ENCODE measurements at regions of chr20 and their contacts with region 1.

Region 1: DNA sequence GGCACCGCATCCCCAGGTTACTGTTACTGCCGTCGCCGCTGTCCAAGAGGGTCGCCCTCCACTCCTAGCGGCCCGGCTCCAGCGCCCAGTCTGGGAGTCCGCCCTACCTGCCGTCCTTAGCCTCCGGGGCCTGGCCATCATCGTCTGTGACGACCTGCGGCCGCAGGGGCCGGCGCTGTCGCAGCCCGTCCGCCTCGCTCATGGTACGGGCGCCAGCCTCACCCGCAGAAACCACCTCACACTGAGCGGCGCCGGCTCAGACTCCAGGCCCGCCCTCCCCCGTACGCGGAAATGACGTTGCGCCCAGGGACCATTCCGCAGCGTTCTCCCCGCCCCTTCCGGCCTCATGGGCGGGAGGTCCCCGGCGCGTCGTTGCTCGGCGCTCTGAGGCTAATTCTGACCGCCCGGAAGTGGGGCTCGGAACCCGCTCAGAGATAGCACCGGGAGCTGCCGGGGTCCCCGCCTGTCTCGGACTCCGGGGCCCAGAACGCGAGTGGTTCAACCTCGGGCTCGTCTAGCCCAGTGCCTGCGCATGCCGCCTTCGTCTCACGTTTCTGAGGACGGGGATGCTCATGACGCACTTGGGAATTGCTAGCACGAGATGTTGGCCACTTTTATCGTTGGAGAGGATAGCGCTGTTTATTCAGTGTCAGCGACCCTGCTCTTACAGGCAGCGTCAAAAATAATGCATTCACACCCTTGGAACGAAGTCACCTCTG is at the start of gene APMAP:
- DNase-seq: peak; percentile 97
- H3K4me3 Mint-ChIP-seq: peak within 1 kb of the TSS; percentile 89
- H3K27ac Mint-ChIP-seq: peak within 1 kb of the TSS; percentile 90
- H3K4me1 Mint-ChIP-seq: peaks cover 57% of the 10 kb centered on the region
- H3K27me3 Mint-ChIP-seq: no peaks in the 10 kb centered on the region
- total RNA-seq, gene APMAP: 46.9 to 50.9 TPM

Region 2: GRCh38 chr20:24948939-24949679 is 43.5 kb before region 1 on chr20 and contains the start of gene CST7:
- CTCF ChIA-PET with region 1: interaction called, 3 read pairs
- intact Hi-C with region 1: loop called (anchors 1 kb)
- DNase-seq: peak; percentile 94
- H3K4me3 Mint-ChIP-seq: peak within 1 kb of the TSS; percentile 72
- H3K27ac Mint-ChIP-seq: peak within 1 kb of the TSS; percentile 96
- H3K4me1 Mint-ChIP-seq: peaks cover 40% of the 10 kb centered on the region
- H3K27me3 Mint-ChIP-seq: no peaks in the 10 kb centered on the region
- total RNA-seq, gene CST7: 37.8 to 43.1 TPM

Region 3: DNA sequence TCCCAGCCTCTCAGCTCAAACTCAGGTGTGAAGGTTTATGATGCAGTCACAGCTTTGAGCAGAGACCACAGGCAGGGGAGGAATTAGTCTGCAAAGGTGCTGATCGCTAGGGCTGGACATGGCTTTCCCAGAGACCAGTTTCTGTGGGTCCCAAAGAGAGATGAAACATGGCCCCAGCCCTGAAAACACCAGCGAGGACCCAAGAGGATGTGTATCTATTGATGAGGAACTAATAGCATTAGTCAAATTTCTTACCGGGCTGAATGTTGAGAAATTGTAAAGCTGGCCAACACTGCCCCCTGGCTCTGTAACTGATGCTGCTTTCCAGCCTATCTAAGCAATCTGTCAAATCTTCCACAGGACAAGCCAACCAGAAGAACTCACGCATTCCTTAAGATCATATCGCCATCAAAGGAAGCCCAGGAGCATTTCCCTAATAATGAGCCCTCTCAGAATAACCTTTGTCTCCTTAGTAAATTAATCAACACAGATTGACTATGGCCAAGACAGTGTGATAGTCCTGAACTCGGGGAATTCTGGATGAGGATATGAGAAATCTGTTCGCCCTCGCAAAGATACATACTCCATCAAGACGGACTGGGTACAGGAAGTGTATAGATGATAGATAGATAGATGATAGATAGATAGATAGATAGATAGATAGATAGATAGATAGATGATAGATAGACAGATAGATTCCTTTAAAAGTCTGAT is 73.1 kb after region 1 on chr20:
- CTCF ChIA-PET with region 1: interaction called, 105 read pairs
- intact Hi-C with region 1: loop called (anchors 1 kb)
- DNase-seq: peak; percentile 76
- H3K4me3 Mint-ChIP-seq: no peak overlapping the region
- H3K27ac Mint-ChIP-seq: no peak overlapping the region
- H3K4me1 Mint-ChIP-seq: no peaks in the 10 kb centered on the region
- H3K27me3 Mint-ChIP-seq: peaks cover 14% of the 10 kb centered on the region

Region 4: DNA sequence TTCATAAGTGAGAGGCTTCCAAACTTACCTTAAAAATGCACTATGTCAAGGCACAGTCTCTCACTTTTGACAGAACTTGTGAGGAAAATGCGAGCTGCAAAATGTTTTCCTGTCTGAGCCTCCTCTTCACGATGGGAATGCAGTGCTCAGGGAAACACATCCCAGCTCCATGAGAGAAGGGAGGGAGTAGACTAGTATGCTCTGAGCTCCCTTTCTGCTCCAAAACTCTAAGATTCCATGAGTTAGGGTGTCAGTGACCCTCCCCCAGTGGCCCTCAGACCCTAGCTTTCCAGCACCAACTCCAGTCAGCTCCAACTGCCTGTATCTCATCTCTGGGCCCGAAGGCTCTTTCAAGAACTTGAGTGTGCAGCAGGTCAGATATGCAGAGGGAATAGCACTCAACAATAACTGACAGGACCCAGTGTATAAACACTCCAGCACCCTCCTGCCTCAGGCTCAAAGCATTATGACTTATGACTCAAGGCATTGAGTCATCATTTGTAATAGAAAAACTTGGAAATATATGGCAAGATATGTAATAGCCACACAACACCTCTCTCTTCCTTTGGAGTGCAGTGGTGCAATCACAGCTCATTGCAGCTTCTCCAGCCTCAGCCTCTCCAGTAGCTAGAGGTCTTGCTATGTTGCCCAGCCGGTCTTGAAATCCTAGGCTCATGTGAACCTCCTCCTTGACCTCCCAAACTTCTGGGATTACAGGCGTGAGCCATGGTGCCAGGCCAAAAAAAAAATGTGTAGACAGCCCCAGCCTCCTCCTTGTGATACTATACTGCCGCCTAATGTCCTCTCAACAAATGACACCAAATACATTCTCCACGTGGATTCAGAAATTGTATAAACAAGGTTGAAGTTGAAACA is 186.2 kb after region 1 on chr20:
- CTCF ChIA-PET with region 1: interaction called, 53 read pairs
- intact Hi-C with region 1: loop called (anchors 1 kb)
- DNase-seq: peak; percentile 38
- H3K4me3 Mint-ChIP-seq: no peak overlapping the region
- H3K27ac Mint-ChIP-seq: no peak overlapping the region
- H3K4me1 Mint-ChIP-seq: no peaks in the 10 kb centered on the region
- H3K27me3 Mint-ChIP-seq: peaks cover 7% of the 10 kb centered on the region

Region 5: DNA sequence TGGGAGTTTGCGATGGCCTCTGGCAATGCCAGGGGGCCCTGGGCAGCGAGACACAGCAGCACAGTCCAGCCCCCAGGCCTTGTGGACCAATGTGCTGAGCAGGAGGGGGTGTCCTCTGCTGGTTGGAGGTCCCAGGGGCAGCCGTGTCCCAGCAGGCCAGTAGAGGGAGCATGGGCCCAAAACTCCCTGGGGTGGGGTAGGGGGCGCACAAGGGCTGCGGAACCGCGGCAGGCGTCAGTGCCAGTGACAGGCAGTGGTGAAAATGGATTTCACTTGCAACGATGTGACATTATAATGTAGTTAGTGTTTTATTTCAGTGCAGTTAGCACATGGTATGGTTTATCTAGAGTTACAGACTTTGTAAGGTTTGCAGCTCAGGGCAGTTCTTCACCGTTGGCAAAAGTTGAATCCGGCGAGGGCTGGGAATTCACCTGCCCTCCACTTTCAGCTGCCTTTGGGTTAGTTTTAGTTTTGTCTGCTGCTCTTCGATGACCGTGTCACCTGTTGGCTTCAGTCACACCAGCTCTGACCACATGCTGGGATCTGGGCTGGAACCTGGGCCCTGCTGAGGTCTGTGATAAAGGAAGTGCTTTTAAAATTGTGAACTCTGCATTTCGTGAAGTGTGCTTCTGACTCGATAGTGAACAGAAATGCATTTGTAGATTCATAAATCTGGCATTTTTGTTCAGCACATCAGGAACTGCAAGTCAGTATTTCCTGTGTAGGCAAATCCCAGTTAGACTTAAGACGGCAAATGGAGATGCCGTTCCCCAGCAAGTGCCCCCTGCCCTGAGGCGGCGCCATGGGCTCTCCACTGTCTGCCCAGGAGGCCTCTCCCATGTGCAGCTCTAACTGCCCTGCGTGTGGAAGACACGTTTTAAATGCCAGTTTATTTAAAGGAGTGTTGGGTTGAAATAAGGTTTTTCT is 302.1 kb after region 1 on chr20:
- CTCF ChIA-PET with region 1: interaction called, 5 read pairs
- intact Hi-C with region 1: loop called (anchors 2 kb)
- DNase-seq: peak; percentile 70
- H3K4me3 Mint-ChIP-seq: no peak overlapping the region
- H3K27ac Mint-ChIP-seq: peak overlapping the region; percentile 11
- H3K4me1 Mint-ChIP-seq: no peaks in the 10 kb centered on the region
- H3K27me3 Mint-ChIP-seq: no peaks in the 10 kb centered on the region

Region 6: GRCh38 chr20:25399037-25399430 is 406.4 kb after region 1 on chr20:
- CTCF ChIA-PET with region 1: interaction called, 14 read pairs
- intact Hi-C with region 1: loop called (anchors 1 kb)
- DNase-seq: peak; percentile 44
- H3K4me3 Mint-ChIP-seq: no peak overlapping the region
- H3K27ac Mint-ChIP-seq: no peak overlapping the region
- H3K4me1 Mint-ChIP-seq: no peaks in the 10 kb centered on the region
- H3K27me3 Mint-ChIP-seq: no peaks in the 10 kb centered on the region

Region 7: DNA sequence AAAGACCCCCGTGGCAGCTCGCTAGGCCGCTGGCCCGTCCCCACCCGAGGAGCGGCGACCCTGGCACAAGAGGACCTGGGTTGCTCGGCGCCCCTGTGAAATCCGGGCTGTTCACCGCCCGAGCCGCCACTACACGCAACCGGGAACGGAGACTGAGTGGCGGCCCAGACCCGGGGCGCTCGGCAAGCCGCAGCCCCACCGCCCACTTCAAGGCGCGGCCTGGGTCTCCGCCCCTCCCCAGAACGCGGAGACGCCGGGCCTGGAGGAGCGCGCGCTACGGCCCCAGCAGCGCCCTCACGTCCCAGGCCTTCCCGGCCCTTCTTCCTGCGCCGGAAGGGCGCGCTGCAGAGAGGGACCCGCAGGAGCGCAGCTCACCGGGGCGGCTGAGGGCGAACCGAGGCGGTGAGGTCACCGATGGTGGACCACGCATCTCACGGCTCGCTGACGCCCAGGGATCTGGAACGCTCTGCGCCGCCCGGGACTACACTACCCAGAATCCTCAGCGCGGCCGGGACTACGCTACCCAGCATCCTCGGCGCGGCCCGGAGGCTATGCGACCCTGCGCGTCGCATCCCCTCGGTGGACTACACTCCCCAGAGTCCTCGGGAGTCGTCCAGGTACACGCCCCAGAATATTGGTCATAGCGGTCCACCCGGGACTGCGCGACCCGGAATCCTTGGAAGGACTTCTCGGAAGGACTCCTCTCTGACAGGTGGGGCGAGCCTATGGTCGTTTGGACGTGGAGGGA is 703.9 kb after region 1 on chr20 and contains the start of gene ZNF337:
- CTCF ChIA-PET with region 1: no interaction called
- intact Hi-C with region 1: loop called (anchors 1 kb)
- DNase-seq: peak; percentile 96
- H3K4me3 Mint-ChIP-seq: peak within 1 kb of the TSS; percentile 93
- H3K27ac Mint-ChIP-seq: peak within 1 kb of the TSS; percentile 81
- H3K4me1 Mint-ChIP-seq: peaks cover 26% of the 10 kb centered on the region
- H3K27me3 Mint-ChIP-seq: no peaks in the 10 kb centered on the region
- total RNA-seq, gene ZNF337: 12.2 to 12.6 TPM

Measured in activated naive CD4-positive, alpha-beta T cell treated with anti-CD3 and anti-CD28 coated beads for 36 hours (primary cell).